ENCODE measurements at regions of chr7 and their contacts with region 1.

Region 1: GRCh38 chr7:130758429-130759056 is 24.5 kb upstream of the KLF14 start:
- DNase-seq: no peak
- ATAC-seq: peak; percentile 40
- H3K4me3 Mint-ChIP-seq: no peak overlapping the region
- H3K27ac Mint-ChIP-seq: no peak overlapping the region
- H3K4me1 Mint-ChIP-seq: no peaks in the 10 kb centered on the region
- H3K27me3 Mint-ChIP-seq: peaks cover 3% of the 10 kb centered on the region
- CTCF ChIP-seq: peak; percentile 47

Region 2: DNA sequence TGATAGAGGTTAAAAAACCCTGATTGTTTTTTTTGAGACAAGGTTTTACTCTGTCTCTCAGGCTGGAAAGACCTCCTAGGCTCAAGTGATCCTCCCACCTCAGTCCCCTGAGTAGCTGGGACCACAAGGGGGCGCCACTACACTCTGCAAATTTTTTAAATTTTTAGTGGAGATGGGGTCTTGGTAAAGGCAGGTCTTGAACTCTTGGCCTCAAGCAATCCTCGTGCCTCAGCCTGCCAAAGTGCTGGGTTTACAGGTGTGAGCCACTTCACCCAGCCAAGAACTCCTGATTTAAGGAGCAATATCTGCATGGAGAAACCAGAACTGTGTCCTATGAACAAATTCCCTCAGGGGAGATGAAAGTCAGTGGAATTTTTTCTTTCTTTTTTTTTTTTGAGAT is 695.5 kb before region 1 on chr7:
- CTCF ChIA-PET with region 1: interaction called, 5 read pairs
- POLR2A ChIA-PET with region 1: no interaction called
- intact Hi-C with region 1: loop called (anchors 1 kb)
- DNase-seq: peak; percentile 48
- ATAC-seq: peak; percentile 67
- H3K4me3 Mint-ChIP-seq: no peak overlapping the region
- H3K27ac Mint-ChIP-seq: no peak overlapping the region
- H3K4me1 Mint-ChIP-seq: no peaks in the 10 kb centered on the region
- H3K27me3 Mint-ChIP-seq: peaks cover 7% of the 10 kb centered on the region
- CTCF ChIP-seq: peak; percentile 47

Region 3: DNA sequence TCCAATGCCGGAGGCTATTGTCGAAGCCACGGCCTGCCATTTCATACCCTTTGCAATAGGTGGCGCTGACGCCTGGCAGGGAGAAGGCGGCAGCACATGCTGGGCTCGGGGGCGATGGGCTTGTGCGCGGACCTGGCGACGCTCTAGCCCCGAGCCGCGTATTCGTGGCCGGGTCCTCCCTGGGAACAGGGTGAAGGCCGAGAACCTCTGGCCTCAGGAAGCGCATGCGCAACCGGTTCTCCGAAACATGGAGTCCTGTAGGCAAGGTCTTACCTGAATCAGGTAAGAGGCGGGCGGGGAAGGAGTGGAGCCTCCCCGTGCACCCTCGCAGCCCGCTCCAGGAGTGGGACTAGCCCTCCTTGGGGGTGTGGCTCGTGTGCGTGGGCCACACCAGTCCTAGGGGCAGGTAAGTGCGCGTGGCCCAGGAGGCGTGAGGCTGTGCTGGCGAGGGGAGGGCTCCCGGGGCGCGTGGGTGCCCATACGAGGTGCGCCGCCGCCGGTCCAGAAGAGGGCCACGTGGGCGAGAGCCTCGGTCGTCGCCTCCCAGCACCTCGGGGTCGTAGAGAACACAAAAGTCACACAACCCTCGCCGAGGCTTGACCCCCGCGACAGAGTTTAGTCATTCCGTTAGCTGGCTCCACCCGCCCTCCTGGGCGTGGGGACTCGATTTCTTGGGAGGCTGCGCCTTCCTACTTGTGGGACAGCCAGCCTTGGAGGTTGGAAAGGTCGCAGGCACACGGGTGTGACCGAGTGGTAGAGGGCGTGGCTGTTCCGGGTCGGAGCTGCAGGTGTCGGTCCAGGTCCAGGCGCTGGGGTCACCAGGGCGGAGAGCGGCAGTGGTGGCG is 272.2 kb before region 1 on chr7:
- CTCF ChIA-PET with region 1: interaction called, 5 read pairs
- POLR2A ChIA-PET with region 1: no interaction called
- intact Hi-C with region 1: loop called (anchors 1 kb)
- DNase-seq: peak; percentile 50
- ATAC-seq: peak; percentile 87
- H3K4me3 Mint-ChIP-seq: peak overlapping the region; percentile 87
- H3K27ac Mint-ChIP-seq: peak overlapping the region; percentile 33
- H3K4me1 Mint-ChIP-seq: peaks cover 23% of the 10 kb centered on the region
- H3K27me3 Mint-ChIP-seq: peaks cover 32% of the 10 kb centered on the region
- CTCF ChIP-seq: peak; percentile 60

Region 4: GRCh38 chr7:130733931-130734814 is 24.4 kb before region 1 on chr7 and contains the start of gene KLF14:
- CTCF ChIA-PET with region 1: interaction called, 38 read pairs
- POLR2A ChIA-PET with region 1: interaction called, 8 read pairs
- intact Hi-C with region 1: loop called (anchors 1 kb)
- DNase-seq: peak; percentile 58
- ATAC-seq: peak; percentile 69
- H3K4me3 Mint-ChIP-seq: peak within 1 kb of the TSS; percentile 86
- H3K27ac Mint-ChIP-seq: peak within 1 kb of the TSS; percentile 69
- H3K4me1 Mint-ChIP-seq: peaks cover 7% of the 10 kb centered on the region
- H3K27me3 Mint-ChIP-seq: peaks cover 59% of the 10 kb centered on the region
- CTCF ChIP-seq: no peak
- total RNA-seq, gene KLF14: 0.10 TPM in 1 of 2 replicates, not detected in the other

Region 5: GRCh38 chr7:130831817-130832481 is 73.4 kb after region 1 on chr7:
- CTCF ChIA-PET with region 1: no interaction called
- POLR2A ChIA-PET with region 1: no interaction called
- intact Hi-C with region 1: loop called (anchors 5 kb)
- DNase-seq: no peak
- ATAC-seq: no peak
- H3K4me3 Mint-ChIP-seq: no peak overlapping the region
- H3K27ac Mint-ChIP-seq: no peak overlapping the region
- H3K4me1 Mint-ChIP-seq: no peaks in the 10 kb centered on the region
- H3K27me3 Mint-ChIP-seq: peaks cover 8% of the 10 kb centered on the region
- CTCF ChIP-seq: peak; percentile 79